BJ (cell line): ENCODE measurements at regions of chr6 and their contacts with region 1.

Region 1: DNA sequence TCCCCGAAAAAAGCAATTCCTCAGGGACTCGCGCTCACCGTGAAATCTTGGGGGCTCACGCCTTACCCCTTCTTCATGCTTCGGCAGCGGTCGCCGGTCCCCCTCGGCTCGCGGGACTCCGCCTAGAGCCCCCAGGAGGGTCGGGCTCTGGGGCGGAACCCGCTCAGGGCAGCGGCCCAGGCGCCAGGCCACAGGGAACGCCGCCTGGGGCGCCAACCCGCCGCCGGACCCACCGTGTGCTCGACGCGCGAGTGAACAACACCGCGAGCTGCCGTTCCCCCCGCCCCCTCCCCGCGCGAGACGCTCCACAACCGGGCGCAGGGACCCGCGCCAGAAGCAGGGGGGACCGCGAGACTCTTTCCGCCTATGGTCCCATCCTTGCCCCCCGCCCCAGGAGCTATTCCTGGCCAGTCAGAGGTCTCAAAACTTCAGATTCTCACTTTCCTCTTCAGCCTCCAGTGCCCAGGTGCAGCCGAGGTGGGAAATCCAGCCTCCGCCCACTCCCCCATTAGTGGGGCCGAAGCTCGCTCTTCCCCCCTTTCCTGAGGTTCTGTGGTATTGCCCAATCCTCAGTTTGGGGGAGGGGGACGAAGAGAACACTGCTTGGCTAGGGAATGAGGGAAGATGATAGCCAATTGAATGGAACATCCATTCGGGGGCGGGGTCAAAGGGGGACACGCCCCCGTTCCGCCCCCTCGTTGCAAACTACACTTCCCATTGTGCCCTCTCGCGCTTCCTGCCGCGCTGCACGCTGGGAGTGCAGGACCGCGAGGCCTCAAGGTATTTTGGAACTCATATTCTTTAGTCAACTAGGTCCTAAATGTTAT is at the start of gene WASF1:
- DNase-seq: peak; percentile 94
- H3K4me3 ChIP-seq: peak within 1 kb of the TSS; percentile 81
- H3K27me3 ChIP-seq: no peaks in the 10 kb centered on the region
- CTCF ChIP-seq: no peak
- polyA plus RNA-seq, gene WASF1: 19.5 and 21.8 TPM in 2 replicates

Region 2: GRCh38 chr6:109807881-109808280 is 371.7 kb before region 1 on chr6:
- CTCF ChIA-PET with region 1: no interaction called
- POLR2A ChIA-PET with region 1: no interaction called
- DNase-seq: no peak
- H3K4me3 ChIP-seq: no peak overlapping the region
- H3K27me3 ChIP-seq: no peaks in the 10 kb centered on the region
- CTCF ChIP-seq: no peak

Region 3: GRCh38 chr6:110217266-110217665 is 37.7 kb after region 1 on chr6:
- CTCF ChIA-PET with region 1: interaction called, 3 read pairs
- POLR2A ChIA-PET with region 1: interaction called, 13 read pairs
- DNase-seq: no peak
- H3K4me3 ChIP-seq: no peak overlapping the region
- H3K27me3 ChIP-seq: no peaks in the 10 kb centered on the region
- CTCF ChIP-seq: no peak